ENCODE measurements at regions of chr19 and their contacts with region 1.

Region 1: DNA sequence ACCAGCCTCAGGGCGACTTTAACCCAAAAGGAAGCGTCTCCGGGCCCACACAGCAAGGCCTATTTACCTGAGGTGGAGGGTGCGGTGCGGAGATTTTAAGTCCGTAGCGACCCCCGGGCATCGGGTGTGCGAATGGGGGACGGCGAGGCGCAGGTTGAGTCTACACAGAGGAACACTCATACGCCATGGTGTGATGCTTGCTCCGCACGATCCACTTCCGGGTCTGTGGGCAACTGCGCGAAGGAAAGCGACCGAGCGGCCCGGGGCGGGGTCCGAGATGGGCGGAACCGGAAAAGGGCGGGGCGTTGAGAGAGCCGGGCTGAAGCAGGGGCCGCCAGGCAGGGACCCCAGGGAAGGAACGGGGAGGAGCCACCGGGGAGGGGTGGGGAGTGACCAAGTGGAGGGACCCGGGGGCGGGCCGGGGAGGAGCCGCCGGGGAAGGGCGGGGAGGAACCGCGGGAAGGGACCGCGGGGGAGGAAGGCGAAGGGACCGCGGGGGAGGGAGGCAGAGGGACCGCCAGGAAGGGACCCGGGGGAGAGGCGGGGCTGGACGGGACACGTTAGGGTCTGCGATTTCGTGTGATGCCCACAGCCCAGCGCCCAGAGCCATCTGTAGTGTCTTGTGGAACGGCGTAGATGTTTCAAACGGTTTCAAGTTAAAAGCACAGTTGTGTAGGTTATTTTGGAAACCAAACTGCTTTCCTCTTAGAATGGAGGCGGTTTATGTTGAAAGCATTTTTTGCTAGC is at the start of gene ZNF160:
- DNase-seq: peak; percentile 98
- ATAC-seq: peak; percentile 97
- H3K4me3 ChIP-seq: peak within 1 kb of the TSS; percentile 69 to 98 (median 93)
- H3K4me3 Mint-ChIP-seq: peak within 1 kb of the TSS; percentile 97
- H3K27ac ChIP-seq: peak within 1 kb of the TSS; percentile 83 to 93
- H3K27ac Mint-ChIP-seq: peak within 1 kb of the TSS; percentile 96
- H3K4me1 ChIP-seq: peaks cover 14 to 18% of the 10 kb centered on the region in 2 donors
- H3K4me1 Mint-ChIP-seq: peaks cover 34% of the 10 kb centered on the region
- H3K27me3 ChIP-seq: no peaks in the 10 kb centered on the region
- H3K27me3 Mint-ChIP-seq: no peaks in the 10 kb centered on the region
- CTCF ChIP-seq: no peak
- total RNA-seq, gene ZNF160: 87.8 and 97.5 TPM in 2 replicates

Region 2: GRCh38 chr19:52527134-52527955 is 576.0 kb before region 1 on chr19 and contains the start of gene ZNF808:
- CTCF ChIA-PET with region 1: no interaction called
- POLR2A ChIA-PET with region 1: no interaction called
- intact Hi-C with region 1: loop called (anchors 5 kb)
- DNase-seq: peak; percentile 94
- ATAC-seq: peak; percentile 92
- H3K4me3 ChIP-seq: peak within 1 kb of the TSS; percentile 60 to 97 (median 89)
- H3K4me3 Mint-ChIP-seq: peak within 1 kb of the TSS; percentile 96
- H3K27ac ChIP-seq: peak within 1 kb of the TSS; percentile 88 to 94
- H3K27ac Mint-ChIP-seq: peak within 1 kb of the TSS; percentile 96
- H3K4me1 ChIP-seq: peaks cover 9 to 19% of the 10 kb centered on the region in 2 donors
- H3K4me1 Mint-ChIP-seq: peaks cover 26% of the 10 kb centered on the region
- H3K27me3 ChIP-seq: no peaks in the 10 kb centered on the region
- H3K27me3 Mint-ChIP-seq: no peaks in the 10 kb centered on the region
- CTCF ChIP-seq: peak; percentile 64
- total RNA-seq, gene ZNF808: 54.8 and 56.0 TPM in 2 replicates

Region 3: DNA sequence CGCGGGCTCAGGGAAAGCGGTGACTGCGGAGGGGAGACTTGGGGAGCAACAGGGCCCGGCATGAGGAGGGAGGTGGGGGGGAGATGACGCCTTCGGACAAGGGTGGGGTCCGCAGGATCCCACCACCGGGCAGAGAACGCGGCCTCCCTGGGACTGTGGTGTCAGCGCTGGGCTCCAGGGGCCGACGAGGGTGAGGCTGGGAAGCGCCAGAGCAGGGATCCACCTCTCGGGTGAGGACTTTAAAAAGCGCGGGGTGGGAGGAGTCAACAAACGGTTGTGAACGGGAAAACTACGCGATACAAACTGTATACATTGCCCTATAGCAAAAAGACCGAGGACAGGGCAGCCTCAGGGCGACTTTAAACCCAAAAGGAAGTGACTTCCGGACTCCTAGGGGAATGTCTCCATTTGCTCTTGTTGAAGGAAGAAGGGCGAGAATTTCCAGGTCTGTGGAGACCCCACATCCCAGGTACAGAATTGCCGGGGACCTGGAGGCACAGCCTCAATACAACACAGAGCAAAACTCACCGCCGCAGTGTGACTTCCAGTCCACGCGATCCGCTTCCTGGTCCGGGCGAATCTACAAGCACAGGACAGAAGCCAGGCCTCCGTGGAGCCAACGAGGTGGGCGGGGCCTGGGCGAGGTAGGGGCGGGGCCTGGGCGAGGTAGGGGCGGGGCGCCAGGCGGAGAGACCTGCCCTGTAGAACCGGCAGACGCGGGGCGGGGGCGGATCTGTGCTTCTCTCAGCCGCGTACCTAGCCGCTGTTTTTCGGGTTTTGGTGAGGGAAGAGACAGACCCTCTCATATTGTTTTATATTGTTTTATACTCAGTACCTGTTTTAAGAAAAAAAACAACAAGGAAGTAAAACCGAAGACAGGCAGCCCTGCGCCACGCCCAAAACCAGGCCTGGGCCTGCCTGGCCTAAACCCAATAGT is 180.3 kb before region 1 on chr19 and contains the start of gene ZNF888:
- CTCF ChIA-PET with region 1: no interaction called
- POLR2A ChIA-PET with region 1: no interaction called
- intact Hi-C with region 1: loop called (anchors 2 kb)
- DNase-seq: peak; percentile 89
- ATAC-seq: peak; percentile 100
- H3K4me3 ChIP-seq: peak within 1 kb of the TSS; percentile 82 to 97 (median 88)
- H3K4me3 Mint-ChIP-seq: peak within 1 kb of the TSS; percentile 97
- H3K27ac ChIP-seq: peak within 1 kb of the TSS; percentile 66 to 84
- H3K27ac Mint-ChIP-seq: peak within 1 kb of the TSS; percentile 93
- H3K4me1 ChIP-seq: peaks cover 11 to 18% of the 10 kb centered on the region in 2 donors
- H3K4me1 Mint-ChIP-seq: peaks cover 28% of the 10 kb centered on the region
- H3K27me3 ChIP-seq: no peaks in the 10 kb centered on the region
- H3K27me3 Mint-ChIP-seq: no peaks in the 10 kb centered on the region
- CTCF ChIP-seq: no peak
- total RNA-seq, gene ZNF888: 15.3 and 15.6 TPM in 2 replicates

Region 4: GRCh38 chr19:52962394-52963246 is 140.8 kb before region 1 on chr19 and contains the start of gene ZNF816:
- CTCF ChIA-PET with region 1: no interaction called
- POLR2A ChIA-PET with region 1: no interaction called
- intact Hi-C with region 1: loop called (anchors 1 kb)
- DNase-seq: peak; percentile 96
- ATAC-seq: peak; percentile 100
- H3K4me3 ChIP-seq: peak within 1 kb of the TSS; percentile 72 to 92 (median 80)
- H3K4me3 Mint-ChIP-seq: peak within 1 kb of the TSS; percentile 92
- H3K27ac ChIP-seq: peak within 1 kb of the TSS; percentile 50 to 69
- H3K27ac Mint-ChIP-seq: peak within 1 kb of the TSS; percentile 92
- H3K4me1 ChIP-seq: peaks cover 14 to 19% of the 10 kb centered on the region in 2 donors
- H3K4me1 Mint-ChIP-seq: peaks cover 32% of the 10 kb centered on the region
- H3K27me3 ChIP-seq: no peaks in the 10 kb centered on the region
- H3K27me3 Mint-ChIP-seq: no peaks in the 10 kb centered on the region
- CTCF ChIP-seq: no peak
- total RNA-seq, gene ZNF816: 22.3 and 25.0 TPM in 2 replicates

Region 5: GRCh38 chr19:53158119-53158656 is 54.8 kb after region 1 on chr19:
- CTCF ChIA-PET with region 1: no interaction called
- POLR2A ChIA-PET with region 1: no interaction called
- intact Hi-C with region 1: loop called (anchors 1 kb)
- DNase-seq: peak; percentile 53
- ATAC-seq: peak; percentile 18
- H3K4me3 ChIP-seq: peak overlapping the region; percentile 34 to 72 (median 66)
- H3K4me3 Mint-ChIP-seq: peak overlapping the region; percentile 92
- H3K27ac ChIP-seq: peak overlapping the region; percentile 38 to 50
- H3K27ac Mint-ChIP-seq: peak overlapping the region; percentile 54
- H3K4me1 ChIP-seq: peaks cover 13 to 17% of the 10 kb centered on the region in 2 donors
- H3K4me1 Mint-ChIP-seq: peaks cover 26% of the 10 kb centered on the region
- H3K27me3 ChIP-seq: no peaks in the 10 kb centered on the region
- H3K27me3 Mint-ChIP-seq: no peaks in the 10 kb centered on the region
- CTCF ChIP-seq: no peak

Region 6: DNA sequence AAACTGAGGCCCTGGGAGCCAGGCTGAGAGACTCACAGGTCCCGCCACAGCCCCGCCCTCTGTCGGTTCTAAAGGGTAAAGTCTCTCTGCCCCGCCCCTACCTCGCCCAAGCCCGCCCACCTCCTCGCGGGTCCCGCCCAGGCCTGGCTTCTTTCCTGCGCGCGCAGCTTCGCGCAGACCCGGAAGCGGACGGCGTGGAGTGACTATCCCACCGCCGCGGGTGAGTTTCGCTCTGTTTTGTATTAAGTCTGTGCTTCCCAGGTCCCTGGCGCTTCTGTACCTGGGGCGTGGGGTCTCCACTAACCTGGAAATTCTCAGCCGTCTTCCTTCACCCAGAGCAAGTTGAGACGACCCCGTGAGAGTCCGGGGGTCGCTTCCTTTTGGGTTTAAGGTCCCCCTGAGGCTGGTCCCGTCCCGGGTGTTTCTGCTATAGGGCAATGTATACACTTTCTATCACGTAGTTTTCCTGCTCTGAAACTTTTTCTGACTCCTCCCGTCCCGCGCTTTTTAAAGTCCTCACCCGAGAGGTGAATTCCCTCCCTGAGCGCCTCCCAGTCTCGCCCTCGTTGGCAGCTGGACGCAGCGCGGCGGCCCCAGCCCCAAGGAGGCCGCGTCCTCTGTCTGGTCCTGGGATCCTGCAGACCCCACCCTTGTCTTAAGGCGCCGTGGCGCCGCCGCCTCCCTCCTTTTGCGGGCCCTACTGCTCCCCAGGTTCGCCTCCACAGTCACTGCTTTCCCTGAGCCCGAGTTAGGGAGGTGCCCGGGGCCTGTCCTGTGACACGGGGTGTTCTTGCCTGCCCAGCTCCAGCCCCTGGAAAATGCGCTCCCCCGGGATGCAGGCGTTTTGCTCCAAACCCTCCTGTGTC is 291.8 kb after region 1 on chr19 and contains the start of gene ZNF765:
- CTCF ChIA-PET with region 1: no interaction called
- POLR2A ChIA-PET with region 1: no interaction called
- intact Hi-C with region 1: loop called (anchors 1 kb)
- DNase-seq: peak; percentile 96
- ATAC-seq: peak; percentile 100
- H3K4me3 ChIP-seq: peak within 1 kb of the TSS; percentile 65 to 85 (median 78)
- H3K4me3 Mint-ChIP-seq: peak within 1 kb of the TSS; percentile 86
- H3K27ac ChIP-seq: peak within 1 kb of the TSS; percentile 34 to 85
- H3K27ac Mint-ChIP-seq: peak within 1 kb of the TSS; percentile 69
- H3K4me1 ChIP-seq: peaks cover 11 to 16% of the 10 kb centered on the region in 2 donors
- H3K4me1 Mint-ChIP-seq: peaks cover 30% of the 10 kb centered on the region
- H3K27me3 ChIP-seq: no peaks in the 10 kb centered on the region
- H3K27me3 Mint-ChIP-seq: no peaks in the 10 kb centered on the region
- CTCF ChIP-seq: peak; percentile 64
- total RNA-seq, gene ZNF765: 24.0 and 26.6 TPM in 2 replicates

Measured in B cell (primary cell).